B cell (primary cell): ENCODE measurements at regions of chr4 and their contacts with region 1.

Region 1: DNA sequence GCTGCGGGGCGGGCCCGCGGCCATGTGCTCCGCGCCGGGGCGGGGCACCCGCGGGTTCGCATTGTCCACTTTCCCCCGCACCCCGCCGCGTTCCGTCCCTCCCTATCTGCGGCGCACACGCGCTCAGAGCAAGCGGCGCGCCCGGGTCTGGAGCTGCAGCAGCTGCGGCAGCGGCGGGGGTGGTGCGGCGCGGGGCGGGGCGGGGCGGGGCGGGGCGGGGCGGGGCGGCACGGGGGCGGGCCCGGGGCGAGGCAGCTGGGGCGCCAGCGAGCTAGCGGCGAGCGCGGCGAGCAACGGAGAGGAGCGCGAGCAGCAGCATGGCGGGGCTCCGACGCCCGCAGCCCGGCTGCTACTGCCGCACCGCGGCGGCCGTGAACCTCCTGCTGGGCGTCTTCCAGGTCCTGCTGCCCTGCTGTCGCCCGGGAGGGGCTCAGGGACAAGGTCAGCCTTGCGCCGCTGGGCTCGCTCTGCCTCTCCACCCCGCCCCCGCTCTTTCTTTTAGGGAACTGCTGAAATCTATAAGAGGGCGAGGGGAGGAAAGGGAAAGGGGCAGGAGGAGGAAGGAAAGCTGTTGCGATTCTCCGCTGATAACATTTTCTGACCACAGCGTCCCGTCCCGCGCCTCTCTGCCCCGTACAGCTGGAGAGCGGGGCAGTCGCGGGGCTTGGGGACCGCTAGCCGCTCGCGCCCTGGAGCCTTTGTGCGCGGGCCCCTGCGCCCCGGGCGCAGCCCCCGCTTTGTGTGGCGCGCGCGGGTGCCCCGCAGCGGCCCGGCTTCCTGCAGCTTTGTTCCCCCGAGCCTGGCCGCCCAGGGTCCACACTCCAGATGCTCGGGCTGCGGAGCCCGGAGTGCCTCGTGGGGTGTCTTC is at the start of gene TMEM131L:
- DNase-seq: peak; percentile 90
- ATAC-seq: peak; percentile 51
- H3K4me3 ChIP-seq: peak within 1 kb of the TSS; percentile 62 to 98 (median 94)
- H3K4me3 Mint-ChIP-seq: peak within 1 kb of the TSS; percentile 94
- H3K27ac ChIP-seq: peak within 1 kb of the TSS; percentile 83 to 99
- H3K27ac Mint-ChIP-seq: peak within 1 kb of the TSS; percentile 96
- H3K4me1 ChIP-seq: peaks cover 37 to 44% of the 10 kb centered on the region in 2 donors
- H3K4me1 Mint-ChIP-seq: peaks cover 55% of the 10 kb centered on the region
- H3K27me3 ChIP-seq: no peaks in the 10 kb centered on the region
- H3K27me3 Mint-ChIP-seq: no peaks in the 10 kb centered on the region
- CTCF ChIP-seq: peak; percentile 17
- total RNA-seq, gene TMEM131L: 120 and 123 TPM in 2 replicates

Region 2: GRCh38 chr4:153249199-153250041 is 216.9 kb before region 1 on chr4:
- CTCF ChIA-PET with region 1: no interaction called
- POLR2A ChIA-PET with region 1: no interaction called
- intact Hi-C with region 1: loop called (anchors 10 kb)
- DNase-seq: peak; percentile 96
- ATAC-seq: peak; percentile 98
- H3K4me3 ChIP-seq: peak overlapping the region; percentile 47 to 81 (median 61)
- H3K4me3 Mint-ChIP-seq: peak overlapping the region; percentile 93
- H3K27ac ChIP-seq: peak overlapping the region; percentile 72 to 87
- H3K27ac Mint-ChIP-seq: peak overlapping the region; percentile 85
- H3K4me1 ChIP-seq: peaks cover 12 to 22% of the 10 kb centered on the region in 2 donors
- H3K4me1 Mint-ChIP-seq: peaks cover 21% of the 10 kb centered on the region
- H3K27me3 ChIP-seq: peaks cover 0 to 3% (median 0%) of the 10 kb centered on the region in 4 experiments
- H3K27me3 Mint-ChIP-seq: no peaks in the 10 kb centered on the region
- CTCF ChIP-seq: no peak

Region 3: GRCh38 chr4:153438916-153439756 is 27.2 kb before region 1 on chr4:
- CTCF ChIA-PET with region 1: interaction called, 73 read pairs
- POLR2A ChIA-PET with region 1: interaction called, 9 read pairs
- intact Hi-C with region 1: loop called (anchors 1 kb)
- DNase-seq: peak; percentile 79
- ATAC-seq: peak; percentile 68
- H3K4me3 ChIP-seq: peak overlapping the region; percentile 44 to 81 (median 59)
- H3K4me3 Mint-ChIP-seq: peak overlapping the region; percentile 75
- H3K27ac ChIP-seq: peak overlapping the region; percentile 93 to 97
- H3K27ac Mint-ChIP-seq: peak overlapping the region; percentile 74
- H3K4me1 ChIP-seq: peaks cover 50 to 60% of the 10 kb centered on the region in 2 donors
- H3K4me1 Mint-ChIP-seq: peaks cover 59% of the 10 kb centered on the region
- H3K27me3 ChIP-seq: no peaks in the 10 kb centered on the region
- H3K27me3 Mint-ChIP-seq: no peaks in the 10 kb centered on the region
- CTCF ChIP-seq: no peak

Region 4: GRCh38 chr4:153488006-153488891 is 21.9 kb after region 1 on chr4:
- CTCF ChIA-PET with region 1: interaction called, 34 read pairs
- POLR2A ChIA-PET with region 1: interaction called, 31 read pairs
- intact Hi-C with region 1: loop called (anchors 1 kb)
- DNase-seq: peak; percentile 86
- ATAC-seq: peak; percentile 72
- H3K4me3 ChIP-seq: peak overlapping the region; percentile 40 to 65 (median 51)
- H3K4me3 Mint-ChIP-seq: peak overlapping the region; percentile 87
- H3K27ac ChIP-seq: peak overlapping the region; percentile 96 to 98
- H3K27ac Mint-ChIP-seq: peak overlapping the region; percentile 97
- H3K4me1 ChIP-seq: peaks cover 85 to 90% of the 10 kb centered on the region in 2 donors
- H3K4me1 Mint-ChIP-seq: peaks cover 85% of the 10 kb centered on the region
- H3K27me3 ChIP-seq: no peaks in the 10 kb centered on the region
- H3K27me3 Mint-ChIP-seq: no peaks in the 10 kb centered on the region
- CTCF ChIP-seq: no peak

Region 5: GRCh38 chr4:153521999-153522801 is 55.9 kb after region 1 on chr4:
- CTCF ChIA-PET with region 1: interaction called, 6 read pairs
- POLR2A ChIA-PET with region 1: interaction called, 5 read pairs
- intact Hi-C with region 1: loop called (anchors 1 kb)
- DNase-seq: peak; percentile 66
- ATAC-seq: peak; percentile 29
- H3K4me3 ChIP-seq: peak overlapping the region in 3 of 5 experiments; percentile 14 to 51 (median 17)
- H3K4me3 Mint-ChIP-seq: peak overlapping the region; percentile 82
- H3K27ac ChIP-seq: peak overlapping the region; percentile 61 to 87
- H3K27ac Mint-ChIP-seq: peak overlapping the region; percentile 88
- H3K4me1 ChIP-seq: peaks cover 91 to 96% of the 10 kb centered on the region in 2 donors
- H3K4me1 Mint-ChIP-seq: peaks cover 96% of the 10 kb centered on the region
- H3K27me3 ChIP-seq: no peaks in the 10 kb centered on the region
- H3K27me3 Mint-ChIP-seq: no peaks in the 10 kb centered on the region
- CTCF ChIP-seq: no peak